ENCODE measurements at regions of chr16 and their contacts with region 1.

Region 1: DNA sequence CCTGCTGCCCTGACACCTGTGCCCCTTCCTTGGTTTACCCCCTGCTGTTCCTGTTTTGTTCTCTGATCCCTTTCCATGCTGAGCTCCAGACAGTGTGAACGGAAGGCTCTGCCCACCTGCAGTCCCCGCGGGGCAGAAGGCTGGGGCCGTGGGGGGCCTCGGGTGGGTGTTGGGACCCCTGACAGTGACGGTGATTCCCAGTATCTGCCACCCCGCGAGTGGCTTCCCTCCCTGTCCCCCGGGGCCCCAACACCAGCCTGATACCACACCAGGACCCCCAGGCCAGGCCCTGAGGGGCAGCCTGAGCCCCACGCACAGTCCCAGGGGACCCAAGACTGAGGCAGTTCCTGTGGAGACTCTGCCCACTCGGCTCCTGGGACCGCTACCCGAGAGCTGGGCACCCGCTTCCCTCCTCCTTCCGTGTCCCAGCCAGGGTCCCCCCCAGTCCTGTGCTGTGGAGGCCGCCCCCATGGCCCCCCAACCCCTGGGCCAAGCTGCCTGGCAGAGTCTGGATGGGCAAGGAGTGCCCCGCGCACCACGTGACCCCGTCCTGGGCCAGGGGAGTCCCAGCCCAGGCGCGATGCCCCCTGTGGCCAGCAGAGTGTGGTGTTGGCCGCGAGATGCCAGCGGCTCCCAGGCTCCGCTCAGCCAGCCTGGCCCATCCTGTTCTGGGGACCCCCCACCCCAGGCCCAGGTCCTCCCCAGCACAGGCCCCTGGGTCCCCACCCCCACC is 10.0 kb upstream of the C1QTNF8 start:
- DNase-seq: peak; percentile 50 to 80 (median 67)
- ATAC-seq: peak; percentile 60 to 83 (median 75)
- H3K4me3 ChIP-seq: no peak overlapping the region
- H3K27ac ChIP-seq: no peak overlapping the region
- H3K4me1 ChIP-seq: peaks cover 0 to 8% (median 5%) of the 10 kb centered on the region in 12 donors
- H3K27me3 ChIP-seq: peaks cover 13 to 75% (median 30%) of the 10 kb centered on the region in 9 donors
- CTCF ChIP-seq: peak; percentile 49 to 88 (median 70)
- POLR2A ChIP-seq: no peak

Region 2: DNA sequence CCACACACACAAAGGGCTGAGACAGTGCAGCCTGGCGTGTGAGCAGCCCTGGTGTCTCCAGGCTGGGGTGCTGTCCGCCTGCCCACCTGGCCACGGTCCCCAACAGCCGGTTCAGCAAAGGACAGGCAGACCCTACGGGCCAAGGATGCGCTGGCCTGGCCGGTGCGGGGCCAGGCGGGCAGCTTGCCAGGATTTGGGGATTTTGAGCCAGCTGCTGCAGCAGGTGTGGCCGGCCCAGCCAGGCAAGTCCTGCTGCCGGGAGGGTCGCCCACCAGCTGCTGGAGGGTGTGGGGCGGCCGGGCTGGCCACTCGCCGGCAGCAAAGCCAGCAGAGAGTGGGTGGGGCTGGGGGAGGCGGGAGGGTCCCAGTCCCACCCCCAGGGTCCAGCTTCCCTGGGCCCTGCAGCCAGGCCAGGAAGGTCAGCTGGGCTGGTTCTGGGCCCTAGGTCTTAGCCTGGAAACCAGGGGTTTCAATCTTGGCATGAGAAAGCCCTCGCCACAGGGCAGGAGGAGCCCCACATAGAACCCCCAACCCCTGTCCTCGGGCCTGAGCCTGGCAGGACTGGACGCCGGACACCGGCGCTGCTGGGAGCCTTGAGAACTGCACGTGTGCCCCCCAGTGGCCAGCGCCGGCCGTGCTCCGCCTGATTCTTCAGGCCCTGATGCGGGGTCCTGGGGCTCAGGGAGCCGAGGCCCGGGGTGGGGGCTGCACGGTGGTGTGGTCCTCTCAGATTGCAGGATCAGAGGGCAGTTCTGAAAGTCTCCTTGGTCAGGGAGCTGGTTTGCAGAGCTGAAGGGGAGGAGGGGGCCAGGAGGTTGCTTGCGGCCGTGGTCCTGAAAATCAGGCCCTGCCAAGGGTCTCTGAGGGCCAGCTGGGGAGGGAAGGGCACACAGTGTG is 51.1 kb before region 1 on chr16:
- intact Hi-C with region 1: loop called in 5 of 10 experiments (anchors 1 to 2 kb)
- DNase-seq: peak in 4 of 5 donors; percentile 51 to 75 (median 56)
- ATAC-seq: peak; percentile 30 to 83 (median 72)
- H3K4me3 ChIP-seq: no peak overlapping the region
- H3K27ac ChIP-seq: no peak overlapping the region
- H3K4me1 ChIP-seq: peaks cover 0 to 6% (median 0%) of the 10 kb centered on the region in 12 donors
- H3K27me3 ChIP-seq: peaks cover 0 to 42% (median 7%) of the 10 kb centered on the region in 9 donors
- CTCF ChIP-seq: peak; percentile 65 to 86 (median 80)
- POLR2A ChIP-seq: no peak

Region 3: DNA sequence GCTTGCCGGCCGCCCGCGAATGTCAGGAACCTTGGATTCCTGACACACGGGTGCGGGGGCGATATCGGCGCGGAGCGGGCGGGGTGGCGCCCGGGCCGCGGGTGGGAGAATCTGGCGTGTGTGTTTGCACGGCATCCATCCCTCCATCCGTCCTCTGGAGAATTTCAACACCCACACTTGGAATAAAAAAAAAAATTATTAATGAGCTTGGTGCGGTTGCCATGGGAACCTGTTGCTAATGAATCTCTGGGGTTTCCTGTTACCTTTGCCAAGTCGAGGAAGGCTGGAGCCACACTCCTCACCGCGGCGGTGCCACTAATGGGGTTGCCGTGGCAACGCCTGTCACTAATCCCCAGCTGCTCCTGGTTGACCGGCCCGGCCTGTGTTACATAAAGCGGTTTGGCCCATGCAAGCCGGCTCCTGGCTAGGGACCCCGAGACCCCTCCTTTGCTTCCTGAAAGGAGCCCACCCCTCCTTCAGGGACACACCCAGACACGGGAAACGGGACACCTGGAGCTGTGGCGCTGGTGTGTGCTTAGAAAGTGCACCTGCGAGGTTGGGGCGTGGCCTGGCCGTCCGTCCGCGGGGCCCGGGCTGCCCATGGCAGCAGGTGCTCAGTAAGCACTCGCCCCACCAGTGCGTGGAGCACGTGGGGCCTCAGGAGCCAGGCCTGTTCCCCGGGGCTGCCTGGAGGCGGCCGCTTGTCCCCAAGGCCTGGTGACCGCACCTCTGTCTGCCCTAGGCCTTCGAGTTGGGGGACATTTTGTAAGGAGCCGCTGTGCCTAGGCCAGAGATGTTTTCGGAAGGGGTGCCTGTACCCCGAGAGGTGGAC is 61.4 kb after region 1 on chr16:
- intact Hi-C with region 1: no loop called
- DNase-seq: no peak
- ATAC-seq: no peak
- H3K4me3 ChIP-seq: no peak overlapping the region
- H3K27ac ChIP-seq: peak overlapping the region in 1 of 12 donors; percentile 90
- H3K4me1 ChIP-seq: peaks cover 0 to 12% (median 0%) of the 10 kb centered on the region in 12 donors
- H3K27me3 ChIP-seq: peaks cover 0 to 28% (median 3%) of the 10 kb centered on the region in 9 donors
- CTCF ChIP-seq: no peak
- POLR2A ChIP-seq: no peak

Region 4: DNA sequence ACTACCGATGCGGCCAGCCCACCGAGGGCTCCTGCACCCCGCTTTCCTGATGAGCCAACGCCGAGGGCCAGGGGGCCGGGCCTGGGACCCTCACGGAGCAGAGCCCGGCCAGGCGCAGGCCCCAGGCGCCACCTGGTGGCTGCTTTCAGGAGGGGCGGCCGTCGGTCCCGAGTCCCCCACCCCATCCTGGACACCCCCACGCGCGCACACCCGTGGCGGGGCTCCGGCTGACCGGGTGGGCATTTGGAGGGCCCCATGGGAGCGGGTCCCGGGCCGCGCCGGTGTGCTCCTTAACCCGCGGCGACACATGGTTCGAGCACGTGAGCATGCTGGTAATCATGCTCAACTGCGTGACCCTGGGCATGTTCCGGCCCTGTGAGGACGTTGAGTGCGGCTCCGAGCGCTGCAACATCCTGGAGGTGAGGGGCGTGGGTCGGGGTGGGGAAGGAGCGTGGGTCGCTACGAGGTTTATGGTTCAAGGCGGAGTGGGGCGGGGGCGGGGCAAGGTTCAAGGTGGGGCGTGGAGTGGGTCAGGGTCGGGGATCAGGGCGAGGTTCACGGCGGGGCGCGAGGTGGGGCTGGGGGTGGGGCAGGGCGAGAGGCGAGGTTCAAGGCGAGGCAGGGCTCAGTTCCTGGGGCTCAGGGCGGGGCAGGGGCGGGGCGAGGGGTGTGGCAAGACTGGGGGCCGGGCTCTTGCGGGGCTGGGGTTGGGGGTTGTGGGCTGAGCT is 88.8 kb after region 1 on chr16:
- intact Hi-C with region 1: loop called in 7 of 10 experiments (anchors 1 to 2 kb)
- DNase-seq: no peak
- ATAC-seq: peak in 3 of 4 donors; percentile 8 to 55 (median 20)
- H3K4me3 ChIP-seq: no peak overlapping the region
- H3K27ac ChIP-seq: peak overlapping the region in 1 of 12 donors; percentile 80
- H3K4me1 ChIP-seq: peaks cover 0 to 6% (median 0%) of the 10 kb centered on the region in 12 donors
- H3K27me3 ChIP-seq: peaks cover 0 to 9% (median 0%) of the 10 kb centered on the region in 9 donors
- CTCF ChIP-seq: peak; percentile 59 to 86 (median 72)
- POLR2A ChIP-seq: no peak

Measured in heart left ventricle (tissue), 16 donors.